ENCODE measurements at regions of chr2 and their contacts with region 1.

Region 1: GRCh38 chr2:111049792-111050640 is 70.7 kb upstream of the BCL2L11 start:
- DNase-seq: peak; percentile 54
- CTCF ChIP-seq: no peak

Region 2: DNA sequence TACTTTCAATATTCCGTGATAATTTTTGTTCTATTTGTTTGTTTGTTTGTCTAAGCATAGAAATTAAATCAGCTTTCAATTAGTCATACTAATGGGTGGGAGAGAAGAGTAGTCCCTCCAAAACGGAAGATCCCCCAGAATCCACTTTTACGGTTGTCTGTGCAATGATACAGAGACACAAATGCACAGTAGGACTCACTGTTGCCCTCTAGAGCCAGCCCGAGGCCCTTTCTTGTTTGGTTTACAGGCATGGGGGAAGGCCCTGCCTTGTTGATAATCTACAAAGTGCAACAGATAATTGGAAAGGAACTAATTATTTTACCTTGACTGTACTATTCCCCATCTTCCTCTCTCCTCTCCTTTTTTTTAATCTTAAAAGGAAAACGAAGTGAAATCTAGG is 196.5 kb before region 1 on chr2:
- in situ Hi-C with region 1: loop called (anchors 25 kb)
- DNase-seq: peak; percentile 52
- CTCF ChIP-seq: peak; percentile 53